Motor neuron (in vitro differentiated cells): ENCODE measurements at regions of chr1 and their contacts with region 1.

Region 1: GRCh38 chr1:153805042-153805745 is 30.0 kb downstream of the SLC27A3 start:
- ATAC-seq: peak in 7 of 8 experiments; percentile 18 to 96 (median 38)
- H3K4me3 ChIP-seq: no peak overlapping the region
- H3K27ac ChIP-seq: peak overlapping the region in 1 of 2 donors; percentile 30
- H3K4me1 ChIP-seq: peaks cover 17 to 20% of the 10 kb centered on the region in 2 donors

Region 2: GRCh38 chr1:153608742-153609584 is 196.2 kb before region 1 on chr1:
- in situ Hi-C with region 1: no loop called
- ATAC-seq: peak; percentile 57 to 85 (median 73)
- H3K4me3 ChIP-seq: no peak overlapping the region
- H3K27ac ChIP-seq: no peak overlapping the region
- H3K4me1 ChIP-seq: peaks cover 18 to 42% of the 10 kb centered on the region in 2 donors

Region 3: DNA sequence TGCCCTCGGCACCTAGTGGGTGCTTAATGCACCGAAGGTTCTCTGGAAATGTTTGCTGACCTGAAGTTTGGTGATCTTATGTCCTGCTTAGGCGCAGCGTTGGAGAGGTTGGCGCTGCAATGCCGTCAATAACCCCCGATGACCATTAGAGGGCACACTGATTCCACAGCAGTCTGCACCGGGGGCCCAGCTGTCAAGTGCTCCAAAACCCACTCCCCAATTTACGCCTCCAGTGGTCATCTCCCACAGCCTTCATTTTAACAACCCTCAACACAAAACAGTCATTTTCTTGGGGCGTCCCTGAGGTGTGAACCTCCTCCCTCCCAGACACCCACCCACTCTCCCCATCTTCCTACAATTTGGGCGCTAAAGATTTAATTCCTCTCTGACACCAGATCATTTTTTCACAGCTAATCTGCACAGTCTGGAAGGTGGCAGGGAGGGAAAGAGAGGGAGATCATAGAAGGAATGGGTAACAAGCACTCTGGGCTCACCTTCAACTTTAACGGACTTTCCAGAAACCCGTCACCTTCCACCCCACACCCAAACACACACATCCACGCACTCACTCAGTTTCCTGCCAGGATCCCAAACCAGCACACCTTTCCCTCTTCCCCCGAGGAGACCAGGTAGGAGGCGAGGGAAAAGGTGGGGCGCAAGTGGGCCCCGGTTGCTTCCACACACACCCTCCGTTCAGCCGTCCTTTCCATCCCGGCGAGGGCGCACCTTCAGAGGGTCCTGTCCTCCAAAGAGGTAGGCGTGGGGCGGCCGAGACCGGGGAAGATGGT is 127.3 kb before region 1 on chr1:
- in situ Hi-C with region 1: no loop called
- ATAC-seq: peak; percentile 27 to 72 (median 64)
- H3K4me3 ChIP-seq: peak overlapping the region; percentile 29 to 36 (median 35)
- H3K27ac ChIP-seq: no peak overlapping the region
- H3K4me1 ChIP-seq: peaks cover 6 to 7% of the 10 kb centered on the region in 2 donors

Region 4: GRCh38 chr1:153946622-153947241 is 141.5 kb after region 1 on chr1 and contains the start of gene DENND4B:
- in situ Hi-C with region 1: loop called in 2 of 9 experiments (anchors 25 kb)
- ATAC-seq: peak; percentile 68 to 88 (median 86)
- H3K4me3 ChIP-seq: peak within 1 kb of the TSS; percentile 71 to 94 (median 91)
- H3K27ac ChIP-seq: peak within 1 kb of the TSS; percentile 44 to 73
- H3K4me1 ChIP-seq: peaks cover 7 to 9% of the 10 kb centered on the region in 2 donors
- total RNA-seq, gene DENND4B: 11.5 to 46.0 (median 29.8) TPM

Region 5: DNA sequence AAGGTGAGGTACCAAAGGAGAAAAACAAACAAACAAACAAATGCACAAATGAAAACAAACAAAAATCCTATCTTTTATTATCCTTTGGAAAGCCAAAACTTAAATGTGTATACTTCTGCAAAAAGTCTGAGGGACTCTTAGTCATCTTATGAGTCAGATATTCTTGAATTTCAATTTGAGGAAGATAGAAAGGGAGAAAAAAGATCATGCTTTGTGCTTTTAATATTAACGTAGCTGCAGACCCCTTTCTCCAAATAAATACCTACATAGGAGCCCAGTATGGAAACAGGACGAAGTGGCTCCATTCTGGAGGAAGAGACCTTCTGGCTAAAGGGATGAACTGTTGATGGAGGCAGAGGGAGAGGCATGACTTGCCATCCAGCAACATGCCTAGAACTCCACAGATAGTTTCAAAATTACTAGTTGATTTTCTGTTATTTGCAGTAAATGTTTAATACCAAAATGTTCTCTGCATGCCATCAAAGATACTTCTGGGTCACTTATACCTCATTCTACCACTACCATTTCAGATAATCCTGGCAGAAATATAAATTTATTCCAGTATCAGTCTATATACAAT is 324.3 kb after region 1 on chr1:
- in situ Hi-C with region 1: no loop called
- ATAC-seq: peak in 1 of 8 experiments; percentile 53
- H3K4me3 ChIP-seq: no peak overlapping the region
- H3K27ac ChIP-seq: no peak overlapping the region
- H3K4me1 ChIP-seq: no peaks in the 10 kb centered on the region